Activated T-helper 2 cell treated with anti-CD3 and anti-CD28 coated beads, Interferon-gamma antibody, Interleukin-2, Interleukin-4, amounts not matched to agents 10 μg/mL and 5 μg/mL and 100 μg/mL, durations not matched to agents 14 hours and 24 hours and 36 hours (primary cell): ENCODE measurements at regions of chr6 and their contacts with region 1.

Region 1: DNA sequence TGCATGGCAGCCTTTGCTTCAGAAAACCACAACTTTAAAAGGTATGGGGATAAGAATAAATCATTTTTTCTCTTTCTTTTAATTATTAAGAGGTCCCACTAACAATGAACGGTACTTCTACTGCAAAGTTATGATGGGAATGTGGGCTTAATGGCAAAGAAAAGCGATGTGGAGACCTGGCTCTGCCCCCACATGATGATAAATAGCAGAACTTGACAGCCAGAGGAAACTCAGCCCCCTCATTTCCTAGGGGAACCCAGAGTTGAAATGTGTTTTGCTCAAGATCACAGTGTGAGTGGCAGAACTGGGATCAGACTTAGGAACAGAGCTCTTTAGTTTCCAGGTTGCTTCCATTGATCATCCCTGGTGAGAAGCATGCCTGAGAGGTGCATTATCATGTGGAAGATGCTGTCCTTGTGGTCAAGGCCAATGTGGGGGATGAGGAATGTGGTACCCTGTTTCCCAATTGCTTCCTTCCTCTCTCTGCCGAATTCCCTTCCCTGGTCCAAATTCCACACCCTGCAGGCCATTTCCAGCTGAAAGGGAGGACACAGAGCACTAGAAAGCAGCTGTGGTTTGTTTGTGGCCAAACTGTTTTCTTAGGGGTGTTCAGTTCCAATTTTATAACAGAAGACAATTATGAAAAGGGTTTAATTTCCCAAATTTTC is 66.0 kb downstream of the BACH2 start:
- DNase-seq: no peak
- H3K4me3 Mint-ChIP-seq: peak overlapping the region; percentile 7
- H3K27ac Mint-ChIP-seq: peak overlapping the region; percentile 33
- H3K4me1 Mint-ChIP-seq: peaks cover 81% of the 10 kb centered on the region
- H3K27me3 Mint-ChIP-seq: no peaks in the 10 kb centered on the region

Region 2: GRCh38 chr6:90103056-90103800 is 127.5 kb before region 1 on chr6:
- intact Hi-C with region 1: loop called (anchors 2 kb)
- DNase-seq: no peak
- H3K4me3 Mint-ChIP-seq: peak overlapping the region; percentile 56
- H3K27ac Mint-ChIP-seq: peak overlapping the region; percentile 85
- H3K4me1 Mint-ChIP-seq: peaks cover 67% of the 10 kb centered on the region
- H3K27me3 Mint-ChIP-seq: peaks cover 2% of the 10 kb centered on the region

Region 3: DNA sequence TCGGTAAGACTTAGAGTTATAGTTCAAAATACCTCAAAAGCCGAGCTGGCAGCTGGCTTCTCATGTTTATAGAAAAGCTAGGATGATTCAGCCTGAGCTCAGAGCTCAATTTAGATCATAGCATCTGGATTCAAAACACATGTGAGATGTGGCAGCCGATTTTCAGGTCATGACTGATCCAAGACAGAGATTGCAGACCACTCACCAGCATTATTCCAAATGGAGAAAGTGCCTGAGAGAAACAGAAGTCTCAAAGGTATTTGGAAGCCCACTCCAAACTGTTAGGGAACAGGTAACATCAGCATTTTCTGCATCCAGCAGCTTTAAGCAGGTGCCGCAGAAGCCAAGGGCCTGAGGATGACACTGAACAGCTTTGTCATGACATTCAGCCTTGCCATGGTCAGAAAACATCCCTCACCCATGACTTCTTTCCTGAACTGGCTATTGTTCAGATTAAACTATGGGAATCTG is 36.3 kb before region 1 on chr6:
- intact Hi-C with region 1: loop called (anchors 2 kb)
- DNase-seq: no peak
- H3K4me3 Mint-ChIP-seq: no peak overlapping the region
- H3K27ac Mint-ChIP-seq: peak overlapping the region; percentile 43
- H3K4me1 Mint-ChIP-seq: peaks cover 63% of the 10 kb centered on the region
- H3K27me3 Mint-ChIP-seq: no peaks in the 10 kb centered on the region

Region 4: DNA sequence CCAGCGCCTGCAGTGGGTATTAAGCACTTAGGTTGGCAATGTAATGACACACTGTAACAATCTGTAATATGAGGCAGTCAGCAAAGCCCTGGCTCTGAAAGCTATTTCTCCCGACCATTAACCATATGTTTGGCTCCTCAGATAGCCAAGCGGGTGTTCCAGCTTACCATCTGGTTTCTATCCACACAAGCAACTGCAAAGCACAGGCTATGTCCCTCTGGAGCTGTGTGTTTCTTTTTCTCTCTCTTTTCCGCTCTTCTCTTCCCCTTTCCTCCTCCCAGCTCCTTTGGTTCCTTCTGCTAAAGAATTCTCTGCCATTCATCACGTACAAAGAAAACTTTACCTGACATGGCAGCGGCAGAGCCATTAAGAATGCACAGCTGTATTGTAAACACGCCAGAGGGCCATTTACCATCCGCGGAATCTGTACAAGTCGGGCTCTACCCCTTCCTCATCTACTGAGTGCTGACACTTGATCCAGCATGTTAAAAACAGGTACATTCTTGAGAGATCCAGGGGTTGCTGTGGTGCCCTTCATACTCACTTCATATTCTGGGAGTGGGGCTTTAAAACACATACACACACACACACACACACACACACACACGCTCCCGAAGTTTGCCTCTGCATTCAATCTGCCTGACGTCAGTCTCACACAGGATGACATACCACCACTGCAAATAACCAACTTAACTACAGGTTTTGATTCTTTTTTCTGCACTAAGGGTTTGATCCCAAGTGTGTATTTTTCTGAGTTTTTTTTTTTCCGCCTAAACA is 11.3 kb before region 1 on chr6:
- intact Hi-C with region 1: loop called (anchors 1 kb)
- DNase-seq: no peak
- H3K4me3 Mint-ChIP-seq: no peak overlapping the region
- H3K27ac Mint-ChIP-seq: no peak overlapping the region
- H3K4me1 Mint-ChIP-seq: peaks cover 25% of the 10 kb centered on the region
- H3K27me3 Mint-ChIP-seq: no peaks in the 10 kb centered on the region

Region 5: GRCh38 chr6:90241229-90241880 is 10.7 kb after region 1 on chr6:
- intact Hi-C with region 1: no loop called
- DNase-seq: no peak
- H3K4me3 Mint-ChIP-seq: no peak overlapping the region
- H3K27ac Mint-ChIP-seq: no peak overlapping the region
- H3K4me1 Mint-ChIP-seq: peaks cover 45% of the 10 kb centered on the region
- H3K27me3 Mint-ChIP-seq: no peaks in the 10 kb centered on the region

Region 6: GRCh38 chr6:90266905-90267621 is 36.4 kb after region 1 on chr6:
- intact Hi-C with region 1: no loop called
- DNase-seq: no peak
- H3K4me3 Mint-ChIP-seq: peak overlapping the region; percentile 27
- H3K27ac Mint-ChIP-seq: peak overlapping the region; percentile 71
- H3K4me1 Mint-ChIP-seq: peaks cover 82% of the 10 kb centered on the region
- H3K27me3 Mint-ChIP-seq: no peaks in the 10 kb centered on the region

Region 7: GRCh38 chr6:90586836-90587638 is 356.4 kb after region 1 on chr6 and contains the start of gene MAP3K7:
- intact Hi-C with region 1: loop called (anchors 10 kb)
- DNase-seq: peak; percentile 93
- H3K4me3 Mint-ChIP-seq: peak within 1 kb of the TSS; percentile 94
- H3K27ac Mint-ChIP-seq: peak within 1 kb of the TSS; percentile 95
- H3K4me1 Mint-ChIP-seq: peaks cover 42% of the 10 kb centered on the region
- H3K27me3 Mint-ChIP-seq: peaks cover 20% of the 10 kb centered on the region
- total RNA-seq, gene MAP3K7: 30.5 and 32.1 TPM in 2 replicates